GM13977 (cell line): ENCODE measurements at regions of chr17 and their contacts with region 1.

Region 1: DNA sequence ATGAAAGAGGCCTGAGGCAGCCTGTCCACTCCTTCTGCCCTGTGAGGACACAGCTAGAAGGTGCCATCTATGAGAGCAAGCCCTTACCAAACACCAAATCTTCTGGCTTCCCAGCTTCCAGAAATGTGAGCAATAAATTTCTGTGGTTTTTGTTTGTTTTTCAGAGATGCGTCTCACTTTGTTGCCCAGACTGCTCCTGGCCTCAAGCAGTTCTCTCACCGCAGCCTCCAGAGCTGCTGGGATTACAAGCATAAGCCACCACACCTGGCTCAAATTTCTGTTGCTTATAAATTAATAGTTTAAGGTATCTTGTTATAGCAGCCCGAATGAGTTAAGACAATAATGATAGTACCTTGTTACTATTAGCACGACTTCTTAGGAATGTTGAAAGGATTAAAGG is 12.5 kb upstream of the SLC16A11 start:
- DNase-seq: no peak
- CTCF ChIP-seq: no peak

Region 2: DNA sequence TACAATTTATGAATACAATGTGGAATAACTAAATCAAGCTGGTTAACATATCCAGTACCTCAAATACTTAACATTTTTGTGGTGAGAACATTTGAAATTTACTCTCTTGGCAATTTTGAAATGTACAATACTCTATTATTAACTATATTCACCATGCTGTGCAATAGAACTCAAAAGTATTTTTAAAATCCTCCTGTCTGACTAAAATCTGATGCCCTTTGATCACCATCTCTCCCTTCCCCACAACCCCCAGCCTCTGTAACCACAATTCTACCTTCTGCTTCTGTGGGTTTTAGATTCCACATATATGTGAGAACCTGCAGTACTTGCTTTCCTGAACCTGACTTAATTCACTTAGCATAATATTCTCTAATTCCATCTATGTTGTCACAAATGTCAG is 132.2 kb before region 1 on chr17:
- in situ Hi-C with region 1: no loop called
- DNase-seq: no peak
- CTCF ChIP-seq: no peak

Region 3: GRCh38 chr17:7296189-7296902 is 240.0 kb after region 1 on chr17:
- in situ Hi-C with region 1: loop called (anchors 10 kb)
- DNase-seq: peak; percentile 89
- CTCF ChIP-seq: peak; percentile 94